ENCODE measurements at regions of chr2 and their contacts with region 1.

Region 1: DNA sequence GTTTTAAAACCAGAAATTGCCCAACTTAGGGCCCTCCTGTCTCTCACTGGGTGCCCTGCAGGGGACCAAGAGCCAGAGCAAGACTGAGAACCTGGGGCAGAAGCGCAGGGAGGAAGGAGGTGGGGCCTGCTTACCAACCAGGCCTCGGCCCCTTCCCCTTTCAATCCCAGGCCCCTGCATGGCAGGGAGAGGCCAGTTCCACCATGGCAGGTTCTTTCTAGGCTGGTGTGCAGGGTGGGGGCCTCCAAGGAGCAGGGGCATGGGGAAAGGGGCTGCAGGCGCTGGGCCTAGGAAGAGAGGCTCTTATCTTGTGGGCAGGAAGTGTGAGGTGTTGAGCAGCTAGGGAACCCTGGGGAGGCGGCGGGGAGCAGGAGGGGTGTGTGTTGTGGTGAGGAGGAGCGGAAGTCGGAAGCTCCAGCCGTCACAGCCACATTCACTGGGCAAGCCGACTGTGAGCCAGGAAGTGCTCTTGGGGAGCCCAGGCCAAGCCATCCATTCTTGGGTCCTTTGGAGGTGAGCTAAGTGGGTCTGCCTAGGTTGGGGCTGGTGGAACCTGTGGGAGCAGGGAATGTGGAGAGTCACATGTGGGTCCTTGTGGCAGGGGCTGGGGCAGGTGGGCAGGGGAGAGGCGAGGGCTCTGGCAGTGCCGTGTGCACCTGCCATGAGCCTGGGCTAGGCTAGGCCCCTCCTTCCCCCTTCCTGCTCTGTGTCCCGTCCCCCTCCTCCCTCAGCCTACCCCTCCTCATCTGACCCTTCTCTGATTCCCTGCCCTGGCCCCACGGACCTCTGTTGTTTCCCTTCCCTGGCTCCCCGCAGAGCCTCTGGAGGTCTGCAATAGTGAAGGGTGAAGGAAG is at the start of gene PSD4:
- DNase-seq: peak; percentile 87
- ATAC-seq: peak; percentile 70
- H3K4me3 Mint-ChIP-seq: peak within 1 kb of the TSS; percentile 95
- H3K27ac Mint-ChIP-seq: peak within 1 kb of the TSS; percentile 90
- H3K4me1 Mint-ChIP-seq: peaks cover 62% of the 10 kb centered on the region
- H3K27me3 Mint-ChIP-seq: no peaks in the 10 kb centered on the region
- total RNA-seq, gene PSD4: 361 to 385 TPM

Region 2: DNA sequence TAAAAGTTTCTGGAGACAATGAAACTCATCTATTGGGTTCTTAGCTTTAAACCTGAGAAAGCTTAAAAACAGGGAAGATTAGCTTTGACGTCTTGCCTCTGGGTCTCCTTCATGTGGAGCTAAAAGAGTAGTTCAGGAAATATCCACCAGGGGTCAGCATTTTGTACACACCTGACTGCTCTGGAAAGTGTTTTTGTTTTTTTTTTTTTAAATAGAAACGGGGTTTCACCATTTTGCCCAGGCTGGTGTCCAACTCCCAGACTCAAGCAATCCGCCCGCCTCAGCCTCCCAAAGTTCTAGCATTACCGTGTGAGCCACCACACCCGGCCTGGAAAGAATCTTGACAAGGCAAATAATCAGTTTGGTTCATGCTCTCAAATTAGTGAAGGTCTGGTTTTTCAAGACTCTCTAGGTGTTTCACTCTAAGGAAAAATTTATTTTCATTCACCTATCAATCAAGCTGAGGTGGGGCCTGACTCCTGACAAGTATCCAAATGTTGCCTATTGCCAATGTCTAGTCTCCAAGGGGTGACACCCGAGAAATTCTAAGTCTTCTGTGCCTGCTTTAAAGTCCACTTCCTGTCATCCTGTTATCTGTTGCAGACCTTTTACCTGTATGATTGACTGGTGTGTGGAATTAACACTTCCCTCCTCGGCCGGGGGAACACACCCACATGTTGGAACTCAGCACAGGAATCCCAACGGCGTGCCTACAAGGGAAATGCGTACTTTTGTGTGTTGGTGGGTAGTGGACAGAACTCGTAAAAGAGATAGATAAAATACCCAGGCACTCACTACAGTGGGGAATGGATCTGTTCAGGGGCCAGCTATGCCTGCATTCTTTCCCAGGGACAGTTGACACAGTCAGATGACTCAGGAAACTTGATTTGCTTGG is 35.1 kb before region 1 on chr2:
- POLR2A ChIA-PET with region 1: interaction called, 36 read pairs
- DNase-seq: no peak
- ATAC-seq: peak; percentile 74
- H3K4me3 Mint-ChIP-seq: peak overlapping the region; percentile 73
- H3K27ac Mint-ChIP-seq: peak overlapping the region; percentile 84
- H3K4me1 Mint-ChIP-seq: peaks cover 28% of the 10 kb centered on the region
- H3K27me3 Mint-ChIP-seq: peaks cover 4% of the 10 kb centered on the region

Region 3: GRCh38 chr2:113157118-113157896 is 16.5 kb before region 1 on chr2:
- POLR2A ChIA-PET with region 1: interaction called, 85 read pairs
- DNase-seq: peak; percentile 77
- ATAC-seq: peak; percentile 86
- H3K4me3 Mint-ChIP-seq: peak overlapping the region; percentile 85
- H3K27ac Mint-ChIP-seq: peak overlapping the region; percentile 80
- H3K4me1 Mint-ChIP-seq: peaks cover 24% of the 10 kb centered on the region
- H3K27me3 Mint-ChIP-seq: peaks cover 2% of the 10 kb centered on the region

Region 4: GRCh38 chr2:113198790-113199612 is 25.2 kb after region 1 on chr2:
- POLR2A ChIA-PET with region 1: interaction called, 68 read pairs
- DNase-seq: peak; percentile 93
- ATAC-seq: peak; percentile 71
- H3K4me3 Mint-ChIP-seq: no peak overlapping the region
- H3K27ac Mint-ChIP-seq: no peak overlapping the region
- H3K4me1 Mint-ChIP-seq: peaks cover 53% of the 10 kb centered on the region
- H3K27me3 Mint-ChIP-seq: no peaks in the 10 kb centered on the region

Region 5: GRCh38 chr2:113203901-113204519 is 30.2 kb after region 1 on chr2:
- POLR2A ChIA-PET with region 1: interaction called, 68 read pairs
- DNase-seq: peak; percentile 75
- ATAC-seq: peak; percentile 80
- H3K4me3 Mint-ChIP-seq: no peak overlapping the region
- H3K27ac Mint-ChIP-seq: peak overlapping the region; percentile 73
- H3K4me1 Mint-ChIP-seq: peaks cover 29% of the 10 kb centered on the region
- H3K27me3 Mint-ChIP-seq: no peaks in the 10 kb centered on the region

Region 6: DNA sequence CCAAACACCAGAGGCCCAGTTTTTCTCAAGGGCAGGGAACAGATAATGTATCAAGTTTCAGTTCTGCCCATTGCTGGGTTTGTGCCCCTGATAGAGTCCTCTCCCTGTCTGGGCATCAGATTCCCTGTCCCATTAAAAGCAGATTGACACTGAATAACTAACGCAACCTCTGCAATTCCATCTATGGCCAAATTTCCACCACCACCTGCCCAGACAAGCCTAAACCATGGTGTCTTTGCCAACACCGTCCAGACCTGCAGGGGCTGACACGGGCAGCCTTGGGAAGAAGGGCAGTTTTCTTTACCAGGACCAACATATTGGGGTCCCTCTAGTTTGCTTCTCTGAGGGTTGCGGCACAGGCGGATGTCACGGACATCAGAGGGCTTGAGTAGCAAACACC is 131.4 kb after region 1 on chr2:
- POLR2A ChIA-PET with region 1: no interaction called
- DNase-seq: no peak
- ATAC-seq: no peak
- H3K4me3 Mint-ChIP-seq: no peak overlapping the region
- H3K27ac Mint-ChIP-seq: no peak overlapping the region
- H3K4me1 Mint-ChIP-seq: no peaks in the 10 kb centered on the region
- H3K27me3 Mint-ChIP-seq: peaks cover 22% of the 10 kb centered on the region

Measured in activated naive CD8-positive, alpha-beta T cell treated with anti-CD3 and anti-CD28 coated beads, Interleukin-2, amount 10 ng/mL, durations not matched to agents 7 days and 5 days (primary cell).